ENCODE measurements at regions of chr15 and their contacts with region 1.

Region 1: GRCh38 chr15:50840520-50840919 is 68.0 kb upstream of the AP4E1 start:
- DNase-seq: no peak
- H3K4me3 ChIP-seq: no peak overlapping the region
- H3K27ac ChIP-seq: no peak overlapping the region
- H3K4me1 ChIP-seq: no peaks in the 10 kb centered on the region
- H3K27me3 ChIP-seq: no peaks in the 10 kb centered on the region
- CTCF ChIP-seq: no peak

Region 2: DNA sequence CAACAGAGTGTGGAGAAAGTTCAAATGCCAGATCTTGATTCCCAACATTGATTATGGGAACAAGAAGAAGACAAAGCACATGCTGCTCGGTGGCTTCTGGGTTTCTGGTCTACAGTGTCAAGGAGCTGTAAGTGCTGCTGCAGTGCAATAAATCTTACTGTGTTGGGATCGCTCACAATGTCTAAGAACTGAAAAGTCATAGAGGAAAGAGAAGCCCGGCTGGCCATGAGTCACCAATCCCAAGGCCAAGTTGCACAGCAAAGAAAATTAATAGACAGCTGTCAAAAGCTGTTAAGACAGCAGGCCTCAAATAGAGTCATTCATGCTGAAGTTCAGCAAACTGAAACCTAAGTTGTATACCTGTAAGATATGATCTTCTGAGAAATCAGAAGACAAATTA is 41.8 kb before region 1 on chr15:
- intact Hi-C with region 1: loop called (anchors 10 kb)
- DNase-seq: no peak
- H3K4me3 ChIP-seq: no peak overlapping the region
- H3K27ac ChIP-seq: no peak overlapping the region
- H3K4me1 ChIP-seq: no peaks in the 10 kb centered on the region
- H3K27me3 ChIP-seq: no peaks in the 10 kb centered on the region
- CTCF ChIP-seq: no peak

Region 3: DNA sequence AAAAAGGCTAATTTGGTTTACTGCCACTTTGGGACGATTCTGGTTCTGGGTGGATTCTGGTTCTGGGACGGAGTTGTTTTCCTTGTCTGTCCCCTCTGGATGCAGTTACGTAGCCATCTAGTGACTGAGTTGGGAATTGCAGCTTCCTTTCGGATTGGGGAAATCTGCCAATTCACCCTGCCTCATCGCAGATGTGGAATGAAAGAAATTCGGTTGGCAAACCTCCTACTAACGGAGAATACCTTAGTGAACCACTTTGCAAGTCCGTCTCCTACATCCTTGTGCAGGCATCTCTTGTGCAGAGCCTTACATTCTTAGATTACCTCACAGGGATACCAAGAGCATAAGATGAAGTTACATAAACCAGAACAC is 36.5 kb after region 1 on chr15:
- intact Hi-C with region 1: no loop called
- DNase-seq: peak; percentile 20 to 92
- H3K4me3 ChIP-seq: peak overlapping the region; percentile 41 to 55
- H3K27ac ChIP-seq: no peak overlapping the region
- H3K4me1 ChIP-seq: no peaks in the 10 kb centered on the region
- H3K27me3 ChIP-seq: no peaks in the 10 kb centered on the region
- CTCF ChIP-seq: peak; percentile 81 to 99 (median 98)